ENCODE measurements at regions of chr5 and their contacts with region 1.

Region 1: GRCh38 chr5:43225649-43226245 is 33.7 kb downstream of the NIM1K start:
- DNase-seq: no peak
- ATAC-seq: no peak
- H3K4me3 Mint-ChIP-seq: no peak overlapping the region
- H3K27ac Mint-ChIP-seq: no peak overlapping the region
- H3K4me1 Mint-ChIP-seq: no peaks in the 10 kb centered on the region
- H3K27me3 Mint-ChIP-seq: no peaks in the 10 kb centered on the region
- CTCF ChIP-seq: no peak

Region 2: DNA sequence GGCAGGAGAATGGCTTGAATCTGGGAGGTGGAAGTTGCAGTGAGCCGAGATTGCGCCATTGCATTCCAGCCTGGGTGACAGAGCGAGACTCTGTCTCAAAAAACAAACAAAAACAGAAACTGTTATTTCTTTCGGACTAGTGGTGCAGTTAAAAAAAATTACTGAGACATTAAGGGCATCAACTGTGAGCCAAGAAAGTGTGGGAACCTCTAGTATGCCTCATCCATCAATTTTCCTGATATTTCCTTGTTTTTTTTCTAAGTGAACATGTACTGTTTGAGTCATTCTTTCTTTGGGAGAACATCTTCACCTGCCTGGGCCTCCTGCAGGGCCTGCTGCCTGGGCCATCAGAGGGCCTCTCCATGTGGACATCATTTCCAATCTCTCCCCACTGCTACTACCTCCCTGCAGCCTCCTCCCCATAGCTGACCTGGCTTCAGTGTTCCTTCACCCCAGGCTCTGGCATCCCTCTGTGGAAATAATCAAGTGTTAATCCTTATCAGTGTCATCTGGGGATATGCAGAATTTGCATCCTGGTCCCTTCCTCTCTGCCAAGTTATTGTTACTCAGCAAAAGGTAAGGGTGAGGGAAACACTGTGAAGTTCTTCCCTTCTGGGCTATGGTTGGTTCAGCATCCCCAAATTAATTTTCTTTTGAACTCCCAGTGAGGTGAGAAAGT is 202.4 kb after region 1 on chr5:
- CTCF ChIA-PET with region 1: no interaction called
- POLR2A ChIA-PET with region 1: interaction called, 10 read pairs
- DNase-seq: no peak
- ATAC-seq: no peak
- H3K4me3 Mint-ChIP-seq: no peak overlapping the region
- H3K27ac Mint-ChIP-seq: no peak overlapping the region
- H3K4me1 Mint-ChIP-seq: peaks cover 6% of the 10 kb centered on the region
- H3K27me3 Mint-ChIP-seq: peaks cover 4% of the 10 kb centered on the region; the same call in 1 of the 2 replicates
- CTCF ChIP-seq: no peak

Region 3: DNA sequence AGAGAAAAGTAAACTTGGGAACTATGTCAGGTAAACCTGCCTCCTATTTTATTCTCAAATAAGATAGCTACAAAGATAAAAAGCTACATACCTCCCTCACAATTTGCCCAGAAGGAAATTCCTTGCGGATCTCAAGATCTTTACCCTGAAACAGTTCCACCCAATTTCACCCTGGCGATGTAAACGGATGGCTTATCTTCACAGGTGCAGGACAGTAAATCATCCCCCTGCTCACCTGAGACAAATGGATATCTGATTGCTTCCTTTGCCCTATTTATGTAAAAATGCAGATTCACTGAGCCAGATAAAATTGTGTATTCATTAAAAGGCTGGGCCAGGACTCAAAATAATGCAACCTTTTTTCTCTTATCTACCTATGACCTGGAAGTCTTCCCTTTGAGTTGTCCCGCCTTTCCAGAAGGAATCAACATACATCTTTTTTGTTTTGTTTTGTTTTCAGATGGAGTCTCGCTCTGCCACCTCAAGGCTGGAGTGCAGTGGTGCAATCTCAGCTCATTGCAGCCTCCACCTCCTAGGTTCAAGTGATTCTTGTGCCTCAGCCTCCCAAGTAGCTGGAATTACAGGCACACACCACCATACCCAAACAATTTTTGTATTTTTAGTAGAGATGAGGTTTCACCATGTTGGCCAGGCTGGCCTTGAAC is 244.1 kb after region 1 on chr5:
- CTCF ChIA-PET with region 1: no interaction called
- POLR2A ChIA-PET with region 1: no interaction called
- DNase-seq: no peak
- ATAC-seq: no peak; the same call in 1 of the 2 replicates
- H3K4me3 Mint-ChIP-seq: no peak overlapping the region
- H3K27ac Mint-ChIP-seq: no peak overlapping the region
- H3K4me1 Mint-ChIP-seq: peaks cover 5% of the 10 kb centered on the region
- H3K27me3 Mint-ChIP-seq: no peaks in the 10 kb centered on the region
- CTCF ChIP-seq: no peak

Measured in WTC11 (cell line).